PC-9 (cell line): ENCODE measurements at regions of chr5 and their contacts with region 1.

Region 1: DNA sequence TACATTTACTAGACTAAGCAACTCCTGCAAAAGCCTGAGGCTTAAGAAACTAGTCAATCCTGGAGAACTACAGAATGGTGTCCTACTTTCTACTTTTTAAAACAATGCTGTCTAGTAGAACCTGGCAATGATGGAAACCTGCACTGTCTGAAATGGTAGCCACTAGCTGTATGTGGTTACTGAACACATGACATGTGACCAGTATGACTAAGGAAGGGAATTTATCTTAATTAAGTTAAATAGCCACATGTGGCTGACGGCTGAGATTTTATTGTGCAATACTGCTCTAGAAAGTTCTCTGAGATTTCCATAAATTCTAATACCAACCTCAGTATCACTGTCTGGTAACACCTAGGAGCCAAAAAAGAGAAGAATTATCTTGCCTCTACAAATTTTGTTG is 44.9 kb upstream of the RAPGEF6 start:
- DNase-seq: no peak
- H3K4me3 ChIP-seq: no peak overlapping the region
- H3K27ac ChIP-seq: no peak overlapping the region
- H3K4me1 ChIP-seq: no peaks in the 10 kb centered on the region
- H3K27me3 ChIP-seq: no peaks in the 10 kb centered on the region
- CTCF ChIP-seq: no peak

Region 2: GRCh38 chr5:131589510-131590348 is 90.2 kb before region 1 on chr5:
- CTCF ChIA-PET with region 1: no interaction called
- POLR2A ChIA-PET with region 1: no interaction called
- intact Hi-C with region 1: loop called (anchors 10 kb)
- DNase-seq: peak in 1 of 2 experiments; percentile 13
- H3K4me3 ChIP-seq: no peak overlapping the region
- H3K27ac ChIP-seq: no peak overlapping the region
- H3K4me1 ChIP-seq: no peaks in the 10 kb centered on the region
- H3K27me3 ChIP-seq: no peaks in the 10 kb centered on the region
- CTCF ChIP-seq: peak; percentile 86